ENCODE measurements at regions of chr11 and their contacts with region 1.

Region 1: GRCh38 chr11:27698872-27699474 is 1.3 kb downstream of the BDNF start:
- DNase-seq: peak in 2 of 3 donors; percentile 81 to 83
- ATAC-seq: peak; percentile 89
- H3K4me3 ChIP-seq: no peak overlapping the region
- H3K4me1 ChIP-seq: peaks cover 9% of the 10 kb centered on the region
- CTCF ChIP-seq: peak; percentile 66

Region 2: GRCh38 chr11:28529540-28530410 is 830.8 kb after region 1 on chr11:
- intact Hi-C with region 1: loop called in 1 of 2 experiments (anchors 2 kb)
- DNase-seq: peak in 1 of 3 donors; percentile 42
- ATAC-seq: no peak
- H3K4me3 ChIP-seq: no peak overlapping the region
- H3K4me1 ChIP-seq: no peaks in the 10 kb centered on the region
- CTCF ChIP-seq: no peak

Region 3: GRCh38 chr11:28697920-28698827 is 999.2 kb after region 1 on chr11:
- intact Hi-C with region 1: loop called in 1 of 2 experiments (anchors 10 kb)
- DNase-seq: peak in 2 of 3 donors; percentile 49 to 68
- ATAC-seq: peak; percentile 54
- H3K4me3 ChIP-seq: no peak overlapping the region
- H3K4me1 ChIP-seq: no peaks in the 10 kb centered on the region
- CTCF ChIP-seq: no peak

Region 4: DNA sequence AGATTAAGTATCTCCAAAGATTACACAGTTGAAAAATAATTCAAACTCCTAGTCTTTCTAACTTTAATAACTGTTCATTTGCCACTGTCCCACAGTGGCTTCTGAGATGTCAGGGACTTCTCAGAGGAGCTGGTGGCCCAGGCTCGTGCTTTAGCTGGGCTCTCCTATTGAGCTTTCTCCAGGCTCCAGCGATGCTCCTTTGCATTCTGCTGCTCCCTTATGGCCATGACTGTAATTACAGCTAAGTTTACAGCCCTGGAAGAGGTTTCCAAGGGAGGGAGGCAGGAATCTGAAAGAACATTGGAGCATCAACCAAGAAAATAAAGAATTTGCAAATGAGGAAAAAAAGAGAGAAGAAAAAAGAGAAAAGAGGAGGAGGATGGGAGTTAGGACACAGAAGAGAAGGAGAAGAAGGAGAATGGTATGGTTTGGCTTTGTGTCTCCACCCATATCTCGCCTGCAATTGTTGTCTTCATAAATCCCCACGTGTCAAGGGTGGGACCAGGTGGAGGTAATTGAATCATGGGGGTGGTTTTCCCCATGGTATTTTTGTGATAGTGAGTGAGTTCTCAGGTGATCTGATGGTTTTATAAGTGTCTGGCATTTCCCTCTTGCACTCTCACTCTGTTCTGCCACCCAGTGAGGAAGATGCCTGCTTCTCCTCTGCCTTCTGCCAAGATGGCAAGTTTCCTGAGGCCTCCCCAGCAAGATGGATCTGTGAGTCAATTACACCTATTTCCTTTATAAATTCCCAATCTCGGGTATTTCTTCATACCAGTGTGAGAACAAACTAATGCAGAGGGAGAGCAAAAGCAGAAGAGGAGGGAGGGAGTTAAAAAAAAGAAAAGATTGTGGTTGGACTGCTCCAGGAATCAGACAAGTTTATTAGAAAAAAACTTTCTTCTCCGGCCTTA is 1460.8 kb after region 1 on chr11:
- intact Hi-C with region 1: loop called in 1 of 2 experiments (anchors 10 kb)
- DNase-seq: peak in 2 of 3 donors; percentile 29 to 52
- ATAC-seq: peak; percentile 92
- H3K4me3 ChIP-seq: no peak overlapping the region
- H3K4me1 ChIP-seq: no peaks in the 10 kb centered on the region
- CTCF ChIP-seq: no peak

Measured in mucosa of descending colon (tissue), 3 donors.